ENCODE measurements at regions of chr11 and their contacts with region 1.

Region 1: DNA sequence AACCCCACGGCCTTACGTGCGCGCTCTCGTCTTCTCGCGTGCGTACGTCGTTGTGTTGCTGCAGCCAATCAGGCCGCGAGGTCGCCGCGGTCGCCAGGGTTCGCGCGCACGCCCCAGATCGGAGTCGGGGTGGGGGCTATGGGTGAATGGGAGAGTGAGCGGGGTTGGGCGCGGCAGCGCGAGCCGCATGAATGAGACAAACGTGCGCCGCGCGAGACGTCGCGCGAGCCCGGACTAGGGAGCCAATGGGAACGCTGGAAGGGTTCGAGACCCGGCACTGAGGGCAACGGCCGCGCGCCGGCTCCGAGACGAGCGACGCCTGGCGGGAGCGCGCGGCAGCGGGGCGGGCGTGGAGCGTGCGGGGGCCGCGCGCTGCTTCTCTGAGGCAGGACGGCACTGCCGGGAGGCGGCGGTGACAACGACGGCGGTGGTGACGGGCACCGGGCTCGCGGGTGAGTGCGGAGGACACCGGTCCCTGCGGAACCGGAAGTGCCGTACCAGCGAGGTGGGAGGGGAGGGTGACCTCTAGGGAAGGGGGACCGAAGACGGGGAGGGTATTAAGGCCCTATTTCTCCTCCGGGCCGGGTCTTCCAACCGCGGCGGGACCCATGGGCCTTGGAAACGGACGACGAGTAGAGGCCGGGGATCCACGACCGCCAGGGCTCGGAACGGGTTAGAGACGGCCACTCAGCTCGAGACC is at the start of gene ZDHHC5:
- DNase-seq: peak; percentile 99 to 100 (median 100)
- ATAC-seq: peak; percentile 97 to 98
- H3K4me3 ChIP-seq: peak within 1 kb of the TSS; percentile 74
- H3K27ac ChIP-seq: peak within 1 kb of the TSS; percentile 91
- H3K4me1 ChIP-seq: no peaks in the 10 kb centered on the region
- H3K27me3 ChIP-seq: no peaks in the 10 kb centered on the region
- total RNA-seq, gene ZDHHC5: 38.9 to 60.4 (median 54.3) TPM

Region 2: GRCh38 chr11:57709802-57710367 is 42.0 kb after region 1 on chr11:
- intact Hi-C with region 1: loop called in 1 of 4 experiments (anchors 5 kb)
- DNase-seq: no peak
- ATAC-seq: no peak
- H3K4me3 ChIP-seq: no peak overlapping the region
- H3K27ac ChIP-seq: no peak overlapping the region
- H3K4me1 ChIP-seq: no peaks in the 10 kb centered on the region
- H3K27me3 ChIP-seq: no peaks in the 10 kb centered on the region

Measured in right cardiac atrium (tissue), 5 donors.